ENCODE measurements at regions of chr7 and their contacts with region 1.

Region 1: DNA sequence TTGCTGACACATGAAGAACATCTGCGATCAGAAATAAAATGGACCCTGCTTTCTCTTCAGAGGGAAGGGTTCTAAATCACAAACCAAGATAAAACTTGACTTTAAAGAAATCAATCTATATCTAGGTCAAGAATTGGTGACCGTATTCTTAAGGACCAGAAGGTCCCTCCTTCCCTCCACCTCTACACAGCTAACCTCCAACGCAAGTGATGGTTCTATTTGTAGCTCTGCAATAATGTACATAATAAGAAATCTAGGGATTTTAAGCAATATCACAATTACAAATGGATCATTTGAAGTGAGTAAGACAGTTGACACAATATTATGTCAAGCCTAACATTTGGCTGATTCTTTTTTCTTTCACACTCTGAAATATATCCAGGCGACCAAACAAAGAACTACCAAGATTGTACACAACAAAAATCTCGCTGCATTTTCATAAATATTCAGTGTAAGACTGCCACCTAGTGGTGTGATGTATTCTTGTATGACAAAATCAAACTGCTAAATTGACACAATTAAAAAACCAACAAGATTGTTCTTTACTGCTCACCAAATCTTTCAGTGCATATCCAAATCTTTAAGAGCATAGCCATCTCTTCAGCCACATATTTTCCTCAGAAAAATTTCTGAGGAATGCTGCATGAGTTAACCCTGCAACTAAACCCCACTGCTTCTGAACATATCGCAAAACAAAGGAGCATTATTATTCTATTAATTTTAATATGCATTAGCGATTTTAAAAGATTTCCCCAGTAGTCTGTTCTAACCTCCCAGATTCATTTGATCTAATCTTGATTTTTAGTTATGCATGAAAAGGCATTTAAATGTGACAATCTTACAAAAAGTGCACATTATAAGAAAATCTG is 44.5 kb downstream of the ICA1 start:
- DNase-seq: peak in 2 of 4 donors; percentile 60 to 76
- ATAC-seq: peak; percentile 90
- H3K4me3 ChIP-seq: no peak overlapping the region
- H3K27ac ChIP-seq: no peak overlapping the region
- H3K4me1 ChIP-seq: no peaks in the 10 kb centered on the region
- H3K27me3 ChIP-seq: no peaks in the 10 kb centered on the region
- CTCF ChIP-seq: peak; percentile 73 to 82

Region 2: DNA sequence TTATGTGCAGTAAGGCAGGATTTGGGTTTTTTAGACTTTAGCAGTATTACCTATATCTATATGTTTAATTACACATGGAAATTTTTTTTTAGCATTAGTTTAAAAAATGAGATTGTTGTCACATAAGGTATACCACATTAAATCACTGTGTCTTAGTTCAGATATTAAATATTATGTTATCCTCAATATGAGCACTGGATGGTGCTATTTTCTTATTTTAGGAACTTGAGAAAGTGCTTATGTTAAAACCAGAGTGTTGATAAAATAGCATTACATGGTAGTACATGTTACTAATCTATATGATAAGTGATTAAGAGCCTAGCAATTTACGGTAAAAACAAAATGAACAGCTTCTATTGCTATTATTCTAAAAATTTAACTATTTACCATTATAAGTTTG is 622.0 kb before region 1 on chr7:
- intact Hi-C with region 1: loop called in 1 of 2 experiments (anchors 10 kb)
- DNase-seq: peak in 2 of 4 donors; percentile 11 to 12
- ATAC-seq: peak; percentile 76
- H3K4me3 ChIP-seq: no peak overlapping the region
- H3K27ac ChIP-seq: no peak overlapping the region
- H3K4me1 ChIP-seq: no peaks in the 10 kb centered on the region
- H3K27me3 ChIP-seq: no peaks in the 10 kb centered on the region
- CTCF ChIP-seq: peak in 1 of 2 donors; percentile 34